Panc1 (cell line): ENCODE measurements at regions of chr22 and their contacts with region 1.

Region 1: GRCh38 chr22:41468381-41469217 is at the starts of genes ACO2 and PHF5A:
- DNase-seq: peak; percentile 98
- ATAC-seq: peak; percentile 98
- H3K4me3 ChIP-seq: peak within 1 kb of the TSS; percentile 73 to 92
- H3K27ac ChIP-seq: peak within 1 kb of the TSS; percentile 95
- H3K4me1 ChIP-seq: peaks cover 11% of the 10 kb centered on the region
- H3K27me3 ChIP-seq: no peaks in the 10 kb centered on the region
- CTCF ChIP-seq: no peak
- total RNA-seq, gene ACO2: 71.5 TPM
- total RNA-seq, gene PHF5A: 34.9 TPM

Region 2: DNA sequence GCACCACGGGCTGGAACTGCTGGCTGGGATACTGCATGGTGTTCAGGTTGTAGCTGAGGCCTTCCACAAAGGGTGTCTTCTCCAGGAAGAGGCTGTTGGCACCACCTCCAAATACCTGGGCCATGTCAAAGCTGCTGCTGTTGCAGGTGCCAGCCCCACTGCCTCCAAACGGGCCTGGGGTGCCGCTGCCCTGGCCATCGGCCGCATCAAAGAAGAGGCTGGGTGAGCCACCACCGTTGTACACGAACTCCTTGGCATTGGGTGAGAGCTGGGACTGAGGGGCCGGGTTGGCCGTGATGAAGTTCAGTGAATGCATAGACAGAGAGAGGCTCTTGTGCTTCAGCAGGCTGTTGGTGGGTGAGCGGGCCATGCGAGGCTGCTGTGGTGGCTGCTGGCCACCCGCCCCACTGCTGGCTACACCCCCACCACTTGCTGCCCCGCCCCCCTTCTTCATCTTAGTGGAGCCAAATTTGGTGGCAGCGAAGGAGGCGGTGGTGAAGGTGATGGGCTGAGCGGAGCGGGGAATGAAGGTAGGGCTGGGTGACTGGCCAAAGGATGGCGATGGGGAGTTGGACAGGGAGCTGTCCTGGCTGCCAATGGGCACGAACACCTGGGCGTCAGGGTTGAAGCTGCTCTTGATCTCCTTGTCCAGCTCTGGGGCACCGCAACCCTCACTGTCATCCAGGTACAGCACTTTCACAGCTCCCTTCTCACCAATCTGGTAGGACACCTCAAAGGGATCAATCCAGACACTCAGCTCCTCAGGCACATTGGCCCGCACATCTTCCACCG is 32.1 kb before region 1 on chr22:
- CTCF ChIA-PET with region 1: no interaction called
- POLR2A ChIA-PET with region 1: no interaction called
- in situ Hi-C with region 1: no loop called
- intact Hi-C with region 1: no loop called
- DNase-seq: no peak
- ATAC-seq: no peak
- H3K4me3 ChIP-seq: no peak overlapping the region
- H3K27ac ChIP-seq: no peak overlapping the region
- H3K4me1 ChIP-seq: no peaks in the 10 kb centered on the region
- H3K27me3 ChIP-seq: no peaks in the 10 kb centered on the region
- CTCF ChIP-seq: no peak

Region 3: DNA sequence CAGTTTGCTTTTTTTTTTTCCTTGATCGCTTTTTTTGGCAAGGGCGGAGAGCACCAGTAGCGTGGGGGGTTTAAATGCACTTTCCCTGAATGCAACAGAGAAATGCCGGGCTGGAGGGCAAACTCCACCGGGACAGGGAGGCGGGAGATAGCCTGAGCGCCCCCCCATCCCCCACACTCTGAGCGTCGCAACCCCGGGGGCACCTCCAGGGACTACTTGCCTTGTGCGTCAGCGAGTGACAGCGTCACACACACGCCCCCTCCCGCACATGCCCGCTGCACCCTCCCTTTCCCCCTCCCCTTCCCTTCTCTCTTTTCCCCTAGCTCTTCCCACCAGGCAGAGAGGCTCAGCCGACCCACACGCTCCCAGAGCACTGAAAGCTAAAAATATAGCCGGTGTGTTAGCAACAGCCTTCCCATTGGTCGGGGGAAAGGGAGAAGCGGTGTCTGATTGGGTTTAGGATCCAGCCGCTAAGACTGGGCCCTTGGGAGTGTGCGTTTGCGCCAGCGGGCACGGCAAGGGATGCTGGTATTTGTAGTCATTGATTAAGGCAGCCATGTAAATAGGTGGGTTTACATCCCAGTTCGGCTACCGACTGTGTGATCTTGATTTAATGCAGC is 20.3 kb before region 1 on chr22:
- CTCF ChIA-PET with region 1: interaction called, 5 read pairs
- POLR2A ChIA-PET with region 1: interaction called, 14 read pairs
- in situ Hi-C with region 1: no loop called
- intact Hi-C with region 1: no loop called
- DNase-seq: peak; percentile 95
- ATAC-seq: peak; percentile 87
- H3K4me3 ChIP-seq: peak overlapping the region; percentile 81 to 96
- H3K27ac ChIP-seq: peak overlapping the region; percentile 95
- H3K4me1 ChIP-seq: no peaks in the 10 kb centered on the region
- H3K27me3 ChIP-seq: no peaks in the 10 kb centered on the region
- CTCF ChIP-seq: no peak

Region 4: GRCh38 chr22:41479671-41480396 is 11.2 kb after region 1 on chr22:
- CTCF ChIA-PET with region 1: no interaction called
- POLR2A ChIA-PET with region 1: interaction called, 11 read pairs
- in situ Hi-C with region 1: no loop called
- intact Hi-C with region 1: no loop called
- DNase-seq: no peak
- ATAC-seq: no peak; the same call in 1 of the 2 replicates
- H3K4me3 ChIP-seq: no peak overlapping the region
- H3K27ac ChIP-seq: no peak overlapping the region
- H3K4me1 ChIP-seq: peaks cover 37% of the 10 kb centered on the region
- H3K27me3 ChIP-seq: no peaks in the 10 kb centered on the region
- CTCF ChIP-seq: no peak

Region 5: GRCh38 chr22:41543854-41544670 is 75.5 kb after region 1 on chr22 and contains the start of gene POLR3H:
- CTCF ChIA-PET with region 1: no interaction called
- POLR2A ChIA-PET with region 1: no interaction called
- in situ Hi-C with region 1: no loop called
- intact Hi-C with region 1: no loop called
- DNase-seq: peak; percentile 77
- ATAC-seq: peak; percentile 98
- H3K4me3 ChIP-seq: peak within 1 kb of the TSS; percentile 78 to 85
- H3K27ac ChIP-seq: peak within 1 kb of the TSS; percentile 88
- H3K4me1 ChIP-seq: peaks cover 10% of the 10 kb centered on the region
- H3K27me3 ChIP-seq: no peaks in the 10 kb centered on the region
- CTCF ChIP-seq: peak; percentile 87
- total RNA-seq, gene POLR3H: 46.6 TPM

Region 6: GRCh38 chr22:41603873-41604332 is 135.3 kb after region 1 on chr22:
- CTCF ChIA-PET with region 1: interaction called, 10 read pairs
- POLR2A ChIA-PET with region 1: no interaction called
- in situ Hi-C with region 1: no loop called
- intact Hi-C with region 1: no loop called
- DNase-seq: no peak
- ATAC-seq: no peak
- H3K4me3 ChIP-seq: no peak overlapping the region
- H3K27ac ChIP-seq: no peak overlapping the region
- H3K4me1 ChIP-seq: no peaks in the 10 kb centered on the region
- H3K27me3 ChIP-seq: no peaks in the 10 kb centered on the region
- CTCF ChIP-seq: no peak